Activated B cell treated with CpG ODN at 0.5 μM for 24 hours (primary cell): ENCODE measurements at regions of chr2 and their contacts with region 1.

Region 1: DNA sequence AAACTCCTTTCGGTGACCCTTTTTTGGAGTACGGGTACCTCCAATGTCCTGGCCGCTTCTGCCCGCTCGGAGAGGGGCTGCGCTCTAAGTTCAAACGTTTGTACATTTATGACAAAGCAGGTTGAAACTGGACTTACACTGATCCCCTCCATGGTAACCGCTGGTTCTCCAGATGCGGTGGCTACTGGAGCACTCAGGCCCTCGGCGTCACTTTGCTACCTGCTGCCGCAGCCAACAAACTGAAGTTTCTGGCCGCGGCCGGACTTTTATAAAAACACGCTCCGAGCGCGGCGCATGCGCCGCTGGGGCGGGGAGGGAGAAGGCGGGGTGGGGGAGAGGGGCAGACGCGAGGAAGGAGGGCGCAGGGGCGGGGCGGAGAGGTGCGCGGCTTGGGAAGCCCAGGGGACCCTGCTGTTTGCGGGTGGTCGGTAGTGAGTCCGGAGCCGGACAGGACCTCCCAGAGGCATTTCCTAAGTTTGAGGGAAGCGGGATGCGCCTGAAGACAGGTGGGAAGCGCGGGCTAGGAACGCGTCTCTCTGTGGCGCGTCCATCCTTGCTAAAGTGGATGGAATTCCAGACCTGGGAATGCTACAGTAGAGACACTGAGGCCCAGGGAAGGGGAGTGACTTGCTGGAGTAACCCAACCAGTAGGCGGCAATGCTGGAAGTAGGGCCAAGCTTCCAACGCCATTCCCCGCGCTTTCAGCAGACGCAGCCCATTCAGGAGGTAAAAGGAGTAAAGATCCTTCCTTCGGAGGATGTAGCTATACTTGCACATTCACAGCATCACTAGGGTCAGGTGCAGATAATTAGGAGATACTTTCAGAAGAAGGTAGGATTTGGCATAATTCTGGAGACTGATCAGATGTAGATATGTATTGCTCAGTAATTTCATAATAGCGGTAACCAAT is at the start of gene CXCR4:
- DNase-seq: peak; percentile 90
- ATAC-seq: peak; percentile 51
- H3K4me3 Mint-ChIP-seq: peak within 1 kb of the TSS; percentile 96
- H3K27ac Mint-ChIP-seq: peak within 1 kb of the TSS; percentile 97
- H3K4me1 Mint-ChIP-seq: peaks cover 66% of the 10 kb centered on the region
- H3K27me3 Mint-ChIP-seq: no peaks in the 10 kb centered on the region
- CTCF ChIP-seq: no peak
- total RNA-seq, gene CXCR4: 200 and 213 TPM in 2 replicates

Region 2: GRCh38 chr2:135913727-135914365 is 204.3 kb before region 1 on chr2:
- CTCF ChIA-PET with region 1: no interaction called
- POLR2A ChIA-PET with region 1: no interaction called
- intact Hi-C with region 1: loop called (anchors 1 kb)
- DNase-seq: no peak
- ATAC-seq: peak; percentile 64
- H3K4me3 Mint-ChIP-seq: no peak overlapping the region
- H3K27ac Mint-ChIP-seq: no peak overlapping the region
- H3K4me1 Mint-ChIP-seq: peaks cover 6% of the 10 kb centered on the region
- H3K27me3 Mint-ChIP-seq: no peaks in the 10 kb centered on the region
- CTCF ChIP-seq: peak; percentile 87

Region 3: GRCh38 chr2:136008205-136008865 is 109.8 kb before region 1 on chr2:
- CTCF ChIA-PET with region 1: no interaction called
- POLR2A ChIA-PET with region 1: interaction called, 13 read pairs
- intact Hi-C with region 1: loop called (anchors 2 kb)
- DNase-seq: peak; percentile 46
- ATAC-seq: peak; percentile 93
- H3K4me3 Mint-ChIP-seq: peak overlapping the region; percentile 52
- H3K27ac Mint-ChIP-seq: peak overlapping the region; percentile 90
- H3K4me1 Mint-ChIP-seq: peaks cover 66% of the 10 kb centered on the region
- H3K27me3 Mint-ChIP-seq: no peaks in the 10 kb centered on the region
- CTCF ChIP-seq: no peak

Region 4: GRCh38 chr2:136129601-136130000 is 11.4 kb after region 1 on chr2:
- CTCF ChIA-PET with region 1: interaction called, 18 read pairs
- POLR2A ChIA-PET with region 1: interaction called, 478 read pairs
- intact Hi-C with region 1: loop called (anchors 1 kb)
- DNase-seq: no peak
- ATAC-seq: no peak
- H3K4me3 Mint-ChIP-seq: peak overlapping the region; percentile 73
- H3K27ac Mint-ChIP-seq: peak overlapping the region; percentile 99
- H3K4me1 Mint-ChIP-seq: peaks cover 99% of the 10 kb centered on the region
- H3K27me3 Mint-ChIP-seq: no peaks in the 10 kb centered on the region
- CTCF ChIP-seq: no peak

Region 5: GRCh38 chr2:136238286-136239078 is 120.3 kb after region 1 on chr2:
- CTCF ChIA-PET with region 1: interaction called, 4 read pairs
- POLR2A ChIA-PET with region 1: interaction called, 86 read pairs
- intact Hi-C with region 1: loop called (anchors 1 kb)
- DNase-seq: peak; percentile 38
- ATAC-seq: peak; percentile 77
- H3K4me3 Mint-ChIP-seq: peak overlapping the region; percentile 24
- H3K27ac Mint-ChIP-seq: peak overlapping the region; percentile 92
- H3K4me1 Mint-ChIP-seq: peaks cover 91% of the 10 kb centered on the region
- H3K27me3 Mint-ChIP-seq: no peaks in the 10 kb centered on the region
- CTCF ChIP-seq: no peak

Region 6: GRCh38 chr2:136327162-136327852 is 209.1 kb after region 1 on chr2:
- CTCF ChIA-PET with region 1: no interaction called
- POLR2A ChIA-PET with region 1: interaction called, 3 read pairs
- intact Hi-C with region 1: loop called (anchors 5 kb)
- DNase-seq: no peak
- ATAC-seq: peak; percentile 78
- H3K4me3 Mint-ChIP-seq: peak overlapping the region; percentile 60
- H3K27ac Mint-ChIP-seq: peak overlapping the region; percentile 85
- H3K4me1 Mint-ChIP-seq: peaks cover 56% of the 10 kb centered on the region
- H3K27me3 Mint-ChIP-seq: no peaks in the 10 kb centered on the region
- CTCF ChIP-seq: no peak